H1 (cell line): ENCODE measurements at regions of chr15 and their contacts with region 1.

Region 1: DNA sequence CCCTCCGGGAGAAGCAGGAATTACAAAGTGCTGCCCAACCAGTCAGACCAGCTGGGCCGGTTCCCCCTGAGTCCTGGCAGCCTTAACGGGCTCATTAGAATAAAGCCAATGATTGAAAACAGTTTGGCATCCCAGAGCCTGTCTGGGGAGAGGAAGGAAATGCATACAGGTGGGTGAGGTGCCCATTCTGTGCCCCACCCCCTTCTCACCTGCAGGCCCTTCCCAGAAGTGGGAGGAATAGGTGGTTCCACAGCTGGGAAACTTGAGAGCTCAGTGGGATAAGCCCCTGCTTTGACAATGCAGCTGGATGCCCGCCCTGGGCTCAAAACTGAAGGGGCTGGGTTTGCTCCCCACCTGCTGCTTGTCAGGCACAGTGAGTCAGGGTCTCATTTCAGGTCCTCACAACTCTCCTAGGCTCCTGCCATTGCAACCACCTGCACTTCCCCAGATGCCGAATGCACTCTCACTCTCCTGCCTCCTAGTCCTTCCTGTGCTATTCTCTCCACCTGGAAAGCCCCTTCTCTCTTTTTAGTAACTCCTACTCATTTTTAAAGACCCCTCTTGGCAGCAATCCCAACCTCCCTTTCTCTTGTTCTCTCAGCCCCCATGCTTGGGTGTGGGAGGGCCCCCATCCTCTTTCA is 5.5 kb upstream of the BUB1B start:
- DNase-seq: peak; percentile 73 to 79
- H3K4me3 ChIP-seq: peak overlapping the region in 3 of 4 experiments; percentile 16 to 40 (median 30); a peak in 4 of 8 replicates
- H3K27ac ChIP-seq: peak overlapping the region; percentile 28; the same call in 1 of the 2 replicates
- H3K4me1 ChIP-seq: peaks cover 9 to 20% (median 19%) of the 10 kb centered on the region in 4 experiments
- H3K27me3 ChIP-seq: no peaks in the 10 kb centered on the region
- CTCF ChIP-seq: no peak
- EP300 ChIP-seq: no peak; a peak in 1 of 3 replicates
- POLR2A ChIP-seq: peak in 1 of 2 experiments; percentile 45; a peak in 1 of 3 replicates
- RAD21 ChIP-seq: no peak; a peak in 1 of 4 replicates

Region 2: DNA sequence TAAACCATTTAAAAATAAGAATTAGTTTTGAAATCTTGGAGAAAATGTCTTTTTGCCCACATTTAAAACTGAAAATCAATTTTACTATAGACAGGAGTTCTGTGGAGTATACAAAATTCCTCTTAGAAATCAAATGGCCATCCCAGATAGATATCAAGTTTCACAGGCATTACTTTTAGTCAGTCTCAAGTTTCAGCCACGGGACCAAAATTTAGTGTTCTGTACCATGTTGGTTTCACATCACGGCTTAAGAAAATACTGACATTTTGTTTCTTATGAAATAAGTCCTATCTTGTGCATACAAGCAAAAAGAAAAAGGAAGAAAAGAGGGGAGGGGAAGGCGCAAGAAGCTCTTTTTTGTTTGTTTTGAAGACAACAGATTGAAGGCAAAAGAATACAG is 175.8 kb before region 1 on chr15:
- CTCF ChIA-PET with region 1: no interaction called
- POLR2A ChIA-PET with region 1: no interaction called
- DNase-seq: no peak
- H3K4me3 ChIP-seq: no peak overlapping the region
- H3K27ac ChIP-seq: no peak overlapping the region
- H3K4me1 ChIP-seq: no peaks in the 10 kb centered on the region
- H3K27me3 ChIP-seq: peaks cover 0 to 1% (median 0%) of the 10 kb centered on the region in 4 experiments; a peak in 1 of 7 replicates
- CTCF ChIP-seq: no peak
- EP300 ChIP-seq: no peak
- POLR2A ChIP-seq: no peak
- RAD21 ChIP-seq: no peak

Region 3: DNA sequence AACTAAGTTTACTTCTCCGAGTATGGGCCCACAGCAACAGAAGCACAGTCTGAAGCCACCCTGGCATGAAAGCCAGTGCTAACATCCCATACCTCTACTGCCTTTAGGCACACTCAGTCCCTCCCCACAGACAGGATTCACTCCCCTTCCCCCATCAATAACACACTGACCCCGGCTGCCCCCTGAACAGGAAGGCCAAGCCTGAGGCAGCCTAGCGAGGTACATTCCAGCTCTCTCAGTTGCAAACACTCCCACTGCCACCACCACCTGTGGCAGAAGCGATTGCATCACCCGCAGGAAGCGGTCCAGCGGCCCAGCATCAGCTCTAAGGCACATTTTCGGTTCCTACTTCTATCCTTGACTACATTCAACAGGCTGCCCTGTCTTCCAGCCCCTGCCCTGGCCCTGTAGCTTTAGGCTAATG is 39.7 kb before region 1 on chr15:
- CTCF ChIA-PET with region 1: interaction called, 249 read pairs
- POLR2A ChIA-PET with region 1: interaction called, 19 read pairs
- DNase-seq: no peak
- H3K4me3 ChIP-seq: no peak overlapping the region
- H3K27ac ChIP-seq: no peak overlapping the region
- H3K4me1 ChIP-seq: peaks cover 5 to 19% (median 9%) of the 10 kb centered on the region in 4 experiments
- H3K27me3 ChIP-seq: no peaks in the 10 kb centered on the region
- CTCF ChIP-seq: no peak
- EP300 ChIP-seq: no peak
- POLR2A ChIP-seq: no peak
- RAD21 ChIP-seq: no peak

Region 4: DNA sequence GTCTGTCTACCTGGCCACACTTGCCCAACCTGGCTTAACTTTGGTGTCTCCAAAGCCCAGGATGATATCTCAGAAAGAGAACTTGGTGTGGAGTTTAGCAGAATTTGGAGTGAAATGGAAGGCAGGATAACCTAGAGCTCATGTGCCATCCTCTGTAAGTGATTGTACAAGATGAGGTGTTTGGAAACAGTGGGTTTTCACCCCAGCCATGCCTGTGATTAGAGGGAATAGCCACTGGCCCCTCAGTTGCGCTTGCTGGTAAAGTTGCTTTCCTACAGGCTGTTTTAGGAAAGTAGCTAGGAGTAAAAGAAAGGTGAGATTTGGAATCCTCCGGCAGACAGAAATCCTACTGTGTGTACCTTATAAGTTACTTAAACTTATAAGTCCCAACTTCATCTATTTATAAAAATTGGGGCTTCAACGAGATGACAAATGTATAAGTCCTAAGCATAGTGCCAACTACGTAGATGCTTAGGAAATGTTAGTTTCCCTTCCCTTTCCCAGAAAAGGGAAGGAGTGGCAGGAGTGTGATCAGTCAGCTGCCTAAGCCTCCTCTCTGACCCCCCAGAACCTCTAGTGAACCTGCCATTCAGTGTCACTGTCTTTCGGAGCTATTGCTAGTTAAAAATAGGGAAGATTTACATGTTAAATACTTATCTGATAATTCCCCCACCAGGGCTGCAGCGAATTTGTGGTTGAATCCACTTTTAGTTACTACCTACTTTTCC is 33.3 kb before region 1 on chr15:
- CTCF ChIA-PET with region 1: interaction called, 4 read pairs
- POLR2A ChIA-PET with region 1: interaction called, 11 read pairs
- DNase-seq: peak in 1 of 2 experiments; percentile 37
- H3K4me3 ChIP-seq: no peak overlapping the region
- H3K27ac ChIP-seq: no peak overlapping the region
- H3K4me1 ChIP-seq: peaks cover 4 to 16% (median 12%) of the 10 kb centered on the region in 4 experiments; a peak in 5 of 7 replicates
- H3K27me3 ChIP-seq: no peaks in the 10 kb centered on the region
- CTCF ChIP-seq: no peak
- EP300 ChIP-seq: no peak
- POLR2A ChIP-seq: no peak
- RAD21 ChIP-seq: no peak